Left cardiac atrium (tissue), 4 donors: ENCODE measurements at regions of chr6 and their contacts with region 1.

Region 1: DNA sequence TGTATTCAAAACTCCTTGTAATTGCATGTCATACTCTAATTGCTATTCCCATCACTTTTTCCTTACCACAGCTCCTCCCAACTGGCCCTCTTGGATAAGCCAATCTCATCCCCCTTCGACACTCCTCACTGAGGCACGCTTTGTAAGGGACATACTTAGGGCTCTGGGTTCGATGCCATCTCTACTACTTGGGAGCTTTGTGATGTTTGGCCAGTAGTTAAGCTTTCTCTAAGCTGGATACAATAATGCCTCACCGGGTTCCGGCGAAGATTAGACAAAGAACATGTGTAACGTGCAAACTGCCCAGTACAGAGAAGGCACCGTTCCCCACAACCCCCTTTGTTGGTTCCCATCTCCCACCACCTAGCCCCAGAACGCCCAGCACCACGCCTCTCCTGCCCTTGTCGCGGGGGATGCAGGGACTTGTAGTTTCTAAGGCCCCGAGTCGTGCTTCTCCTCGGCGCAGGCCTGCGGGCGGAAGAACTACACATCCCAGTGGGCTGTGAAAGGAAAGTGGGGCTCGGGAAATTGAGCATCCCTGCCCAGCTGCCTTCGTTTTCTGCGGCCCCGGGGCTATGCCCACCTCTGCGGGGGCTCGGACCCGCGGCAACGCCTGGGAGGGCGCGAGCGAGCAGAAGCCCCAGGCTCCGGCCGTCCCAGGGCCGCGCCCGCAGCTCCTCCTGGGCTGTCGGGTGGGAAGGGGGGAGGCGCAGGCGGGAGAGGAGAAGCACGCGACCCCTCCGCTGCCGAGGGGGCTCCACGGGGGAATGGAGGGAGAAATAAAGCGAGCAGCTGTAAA is 1.1 kb upstream of the ZDHHC14 start:
- DNase-seq: peak; percentile 93
- ATAC-seq: peak; percentile 89 to 95

Region 2: DNA sequence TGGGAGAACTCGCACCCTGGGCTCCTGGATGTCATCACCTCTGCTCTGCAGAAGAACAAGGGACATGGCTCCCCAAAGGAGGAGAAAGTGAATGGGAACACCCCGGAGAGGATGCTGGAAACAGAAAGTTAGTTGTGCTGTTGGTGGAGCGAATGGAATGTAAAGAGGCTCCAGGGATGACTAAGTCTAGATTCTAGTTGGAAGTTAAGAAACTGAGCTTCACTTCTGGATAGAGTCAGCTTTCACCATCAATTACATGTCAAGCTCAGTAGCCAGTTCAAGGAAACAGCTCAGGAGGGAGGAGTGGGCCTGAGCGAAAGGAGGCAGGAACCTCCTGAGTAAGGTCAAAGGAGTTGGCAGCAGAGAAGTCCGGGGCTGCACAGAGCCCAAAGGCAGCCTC is 734.8 kb before region 1 on chr6:
- intact Hi-C with region 1: no loop called
- DNase-seq: no peak
- ATAC-seq: peak in 1 of 2 donors; percentile 89

Region 3: DNA sequence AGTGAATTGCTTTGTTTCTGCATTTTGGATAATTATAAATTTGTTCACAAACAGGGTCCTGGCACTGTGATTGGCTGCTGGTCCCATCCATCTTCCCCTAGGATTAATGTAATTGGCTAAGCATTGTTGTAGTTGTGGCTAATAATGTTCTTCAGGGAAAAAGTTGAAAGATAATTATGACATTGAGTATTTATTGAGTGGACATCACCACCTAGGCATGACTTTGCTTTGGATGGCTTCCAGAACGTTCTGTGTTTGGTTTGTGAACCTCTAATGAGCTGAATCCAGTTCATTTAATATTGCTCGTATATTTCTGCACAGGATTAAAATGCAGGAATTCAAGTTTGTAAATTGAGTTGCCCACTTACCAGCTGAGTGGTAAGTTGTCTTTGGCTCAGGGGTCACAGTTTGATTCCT is 547.6 kb before region 1 on chr6:
- intact Hi-C with region 1: no loop called
- DNase-seq: no peak
- ATAC-seq: no peak

Region 4: DNA sequence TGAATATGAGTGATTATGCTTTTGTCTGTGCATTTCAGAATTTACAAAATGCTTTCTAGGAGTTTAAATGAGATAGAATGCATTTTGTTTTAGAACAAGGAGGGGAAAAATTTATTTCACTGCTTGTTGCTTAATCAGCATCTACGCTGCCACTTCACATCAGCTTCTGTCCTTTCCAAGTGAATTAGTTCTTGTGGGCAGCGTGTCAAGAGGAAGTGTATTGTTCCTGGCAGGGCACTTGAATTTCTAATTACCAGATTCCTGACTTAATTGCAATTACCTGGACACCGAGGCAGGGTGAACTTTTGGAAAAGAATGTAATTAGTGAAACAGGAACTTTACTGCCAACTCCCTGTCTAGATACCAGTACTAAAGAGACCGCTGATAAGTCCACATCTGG is 320.1 kb before region 1 on chr6:
- intact Hi-C with region 1: no loop called
- DNase-seq: no peak
- ATAC-seq: peak in 1 of 2 donors; percentile 31

Region 5: GRCh38 chr6:157198419-157199279 is 181.2 kb before region 1 on chr6:
- intact Hi-C with region 1: no loop called
- DNase-seq: peak; percentile 60
- ATAC-seq: peak; percentile 87 to 94

Region 6: GRCh38 chr6:157314705-157315321 is 65.0 kb before region 1 on chr6:
- intact Hi-C with region 1: loop called in 1 of 2 experiments (anchors 10 kb)
- DNase-seq: no peak
- ATAC-seq: peak; percentile 50 to 87

Region 7: DNA sequence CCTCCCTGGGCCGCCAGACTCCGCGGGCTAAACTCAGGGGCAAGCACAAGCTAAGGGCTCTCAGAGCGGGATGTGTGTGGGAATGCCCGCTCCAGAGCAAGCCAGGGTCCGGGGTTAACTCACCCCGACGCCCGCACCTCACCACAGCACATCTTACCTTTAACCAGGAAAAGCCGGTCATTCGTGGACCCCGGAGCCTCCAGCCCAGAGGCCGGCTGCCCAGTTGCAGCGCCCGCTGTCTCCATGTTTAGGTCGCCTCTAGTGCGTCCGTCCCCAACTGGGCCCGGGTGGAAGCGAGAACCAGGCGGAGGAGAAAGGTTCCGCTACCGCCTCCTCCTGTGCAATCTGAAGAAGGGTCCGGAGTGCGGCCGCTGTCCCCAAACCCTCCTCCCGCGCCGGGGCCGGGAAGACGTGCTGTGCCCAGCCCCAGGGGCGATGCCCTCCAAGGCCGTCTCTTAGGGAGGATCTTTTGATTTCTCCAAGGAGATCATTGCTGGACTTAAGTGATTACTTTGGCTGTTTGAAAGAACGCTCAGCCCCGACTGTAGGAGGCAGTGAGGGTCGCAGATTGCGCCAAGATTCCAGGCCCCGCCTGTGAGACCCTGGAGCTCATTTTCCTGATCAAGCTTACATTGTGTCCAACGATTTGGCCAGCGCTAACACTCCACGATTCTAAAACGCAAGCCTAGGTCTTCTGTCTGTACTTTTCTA is 56.4 kb before region 1 on chr6 and contains the start of gene TMEM242:
- intact Hi-C with region 1: loop called (anchors 2 to 10 kb)
- DNase-seq: peak; percentile 91
- ATAC-seq: peak; percentile 94 to 96
- total RNA-seq, gene TMEM242: 12.4 to 14.5 TPM

Region 8: GRCh38 chr6:157548635-157549467 is 169.0 kb after region 1 on chr6:
- intact Hi-C with region 1: loop called in 1 of 2 experiments (anchors 10 kb)
- DNase-seq: no peak
- ATAC-seq: peak; percentile 66 to 73

Region 9: GRCh38 chr6:157597446-157598312 is 217.8 kb after region 1 on chr6:
- intact Hi-C with region 1: loop called in 1 of 2 experiments (anchors 5 kb)
- DNase-seq: peak; percentile 49
- ATAC-seq: peak; percentile 71 to 77